Testis (tissue), 5 donors: ENCODE measurements at regions of chr1 and their contacts with region 1.

Region 1: DNA sequence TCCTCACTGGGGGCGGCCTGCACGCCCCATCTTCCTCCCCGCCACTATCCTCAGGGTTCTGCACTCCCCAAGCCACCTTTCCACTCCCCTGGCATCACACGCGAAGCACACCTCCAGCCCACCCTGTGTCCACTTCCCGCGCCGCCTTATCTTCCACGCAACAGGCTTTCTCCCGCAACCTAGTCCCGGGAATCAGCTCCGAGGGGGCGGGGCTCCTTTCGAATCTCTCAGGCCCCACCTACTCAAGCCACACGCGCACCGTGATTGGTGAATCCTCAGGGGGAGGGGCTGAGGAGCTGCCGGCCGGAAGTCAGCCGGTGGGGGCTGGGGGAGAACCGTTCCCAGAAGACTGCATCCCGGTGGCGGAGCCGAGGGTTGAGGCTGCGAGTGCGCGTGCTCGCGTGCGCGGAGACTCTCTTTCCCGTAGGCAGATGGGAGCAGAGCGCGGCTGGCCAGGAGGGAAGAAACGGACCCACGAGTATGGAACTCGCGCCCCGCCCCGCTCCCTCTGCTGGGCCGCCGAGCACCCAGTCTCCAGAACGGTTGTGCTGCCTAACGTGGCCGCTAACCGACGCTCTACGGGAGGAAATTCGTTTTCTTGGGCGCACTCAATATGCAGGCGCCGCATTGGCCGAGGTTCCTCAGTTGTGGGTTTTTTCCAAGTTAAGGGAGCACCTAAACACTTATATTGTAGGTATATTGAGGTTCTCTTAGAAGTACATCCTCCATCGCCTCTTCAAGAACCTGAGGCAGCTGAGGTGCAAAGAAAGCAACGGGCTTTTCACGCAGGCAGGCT is at the start of gene PSRC1:
- DNase-seq: peak; percentile 99
- H3K4me3 ChIP-seq: peak within 1 kb of the TSS; percentile 59 to 84
- H3K27ac ChIP-seq: peak within 1 kb of the TSS; percentile 73 to 82
- H3K4me1 ChIP-seq: peaks cover 46% of the 10 kb centered on the region
- H3K27me3 ChIP-seq: no peaks in the 10 kb centered on the region
- CTCF ChIP-seq: peak; percentile 2 to 53 (median 26)
- POLR2A ChIP-seq: peak; percentile 71
- total RNA-seq, gene PSRC1: 34.0 to 48.9 TPM

Region 2: GRCh38 chr1:109397538-109398342 is 114.6 kb after region 1 on chr1 and contains the start of gene SORT1:
- intact Hi-C with region 1: loop called (anchors 5 kb)
- DNase-seq: peak; percentile 97
- H3K4me3 ChIP-seq: peak within 1 kb of the TSS; percentile 68 to 91
- H3K27ac ChIP-seq: peak within 1 kb of the TSS; percentile 82 to 88
- H3K4me1 ChIP-seq: peaks cover 38% of the 10 kb centered on the region
- H3K27me3 ChIP-seq: no peaks in the 10 kb centered on the region
- CTCF ChIP-seq: peak in 1 of 3 experiments; percentile 1
- POLR2A ChIP-seq: no peak
- total RNA-seq, gene SORT1: 174 to 212 TPM

Region 3: DNA sequence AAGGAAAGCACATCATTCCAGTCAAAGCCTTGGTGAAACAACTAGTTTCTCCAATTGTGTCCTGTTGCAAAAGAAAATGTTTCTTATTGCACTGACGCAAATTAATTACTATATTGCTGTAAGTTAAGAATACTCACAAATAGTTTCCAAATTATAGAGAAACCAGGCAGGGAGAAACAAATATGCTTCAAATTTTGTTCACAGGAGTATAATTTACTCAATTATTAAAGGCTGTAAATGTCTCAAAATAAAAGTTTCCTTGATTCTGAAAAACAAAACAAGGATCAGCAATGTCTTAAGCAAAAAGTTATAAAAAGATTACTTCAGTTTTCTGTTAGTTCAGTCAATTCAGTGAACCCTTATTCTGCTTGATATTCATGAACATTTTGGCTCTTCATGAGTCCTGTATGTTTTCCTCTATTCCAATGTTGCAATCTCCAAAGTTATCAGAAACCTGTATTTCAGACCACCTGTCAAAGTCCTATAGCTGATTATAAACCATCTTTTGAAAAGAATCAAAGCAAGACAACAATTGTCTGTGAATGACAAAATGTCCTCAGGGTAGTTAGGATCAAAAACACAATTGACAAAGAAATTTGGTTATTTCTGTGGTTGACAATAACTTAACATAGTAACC is 171.5 kb after region 1 on chr1:
- intact Hi-C with region 1: no loop called
- DNase-seq: no peak
- H3K4me3 ChIP-seq: no peak overlapping the region
- H3K27ac ChIP-seq: no peak overlapping the region
- H3K4me1 ChIP-seq: no peaks in the 10 kb centered on the region
- H3K27me3 ChIP-seq: no peaks in the 10 kb centered on the region
- CTCF ChIP-seq: no peak
- POLR2A ChIP-seq: no peak